B cell (primary cell): ENCODE measurements at regions of chr3 and their contacts with region 1.

Region 1: DNA sequence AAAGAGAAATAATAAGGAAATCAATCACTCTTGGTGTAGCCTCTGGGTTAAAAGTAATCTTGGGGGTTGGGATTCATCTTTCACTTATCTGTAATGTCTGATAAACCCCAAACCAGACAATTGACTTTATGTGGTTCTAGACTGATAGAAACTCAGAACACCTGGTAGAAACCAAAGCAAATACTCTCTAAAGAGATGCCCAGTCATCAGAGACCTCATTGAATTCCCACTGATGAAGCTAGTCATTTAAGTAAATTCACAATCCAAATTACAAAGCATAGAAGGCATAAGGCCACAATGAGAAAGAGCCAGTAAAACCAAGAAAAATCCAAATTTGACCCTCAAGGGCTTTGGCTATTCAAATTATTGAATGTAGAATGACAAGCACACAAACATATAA is 250.6 kb downstream of the MBNL1 start:
- DNase-seq: no peak
- ATAC-seq: no peak
- H3K4me3 ChIP-seq: no peak overlapping the region
- H3K4me3 Mint-ChIP-seq: no peak overlapping the region
- H3K27ac ChIP-seq: no peak overlapping the region
- H3K27ac Mint-ChIP-seq: peak overlapping the region; percentile 33
- H3K4me1 ChIP-seq: peaks cover 43 to 45% of the 10 kb centered on the region in 2 donors
- H3K4me1 Mint-ChIP-seq: peaks cover 62% of the 10 kb centered on the region
- H3K27me3 ChIP-seq: no peaks in the 10 kb centered on the region
- H3K27me3 Mint-ChIP-seq: no peaks in the 10 kb centered on the region
- CTCF ChIP-seq: no peak

Region 2: GRCh38 chr3:152039887-152040286 is 479.5 kb before region 1 on chr3:
- CTCF ChIA-PET with region 1: no interaction called
- POLR2A ChIA-PET with region 1: interaction called, 11 read pairs
- intact Hi-C with region 1: no loop called
- DNase-seq: no peak
- ATAC-seq: no peak
- H3K4me3 ChIP-seq: no peak overlapping the region
- H3K4me3 Mint-ChIP-seq: no peak overlapping the region
- H3K27ac ChIP-seq: no peak overlapping the region
- H3K27ac Mint-ChIP-seq: no peak overlapping the region
- H3K4me1 ChIP-seq: no peaks in the 10 kb centered on the region
- H3K4me1 Mint-ChIP-seq: peaks cover 5% of the 10 kb centered on the region
- H3K27me3 ChIP-seq: no peaks in the 10 kb centered on the region
- H3K27me3 Mint-ChIP-seq: no peaks in the 10 kb centered on the region
- CTCF ChIP-seq: no peak

Region 3: DNA sequence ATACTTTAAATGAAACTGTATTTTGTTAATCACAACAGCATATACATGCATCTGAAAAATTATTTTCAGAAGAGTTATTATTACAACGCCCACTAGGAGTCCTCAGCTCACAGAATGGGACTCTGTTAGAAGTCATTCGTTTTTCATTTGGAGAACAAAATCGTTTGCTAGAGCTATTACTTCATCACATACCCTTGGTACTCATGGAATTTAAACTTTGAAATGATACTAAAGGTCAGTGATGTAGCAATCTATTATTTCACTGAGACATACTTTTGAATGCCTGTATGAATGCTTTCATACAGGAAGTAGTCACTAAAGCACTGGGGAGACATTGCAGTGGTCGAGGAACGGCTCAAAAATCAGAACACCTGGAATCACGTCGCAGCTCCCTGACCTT is 52.6 kb before region 1 on chr3:
- CTCF ChIA-PET with region 1: interaction called, 73 read pairs
- POLR2A ChIA-PET with region 1: interaction called, 5 read pairs
- intact Hi-C with region 1: no loop called
- DNase-seq: peak; percentile 55
- ATAC-seq: peak; percentile 71
- H3K4me3 ChIP-seq: no peak overlapping the region
- H3K4me3 Mint-ChIP-seq: no peak overlapping the region
- H3K27ac ChIP-seq: peak overlapping the region in 1 of 2 donors; percentile 32
- H3K27ac Mint-ChIP-seq: peak overlapping the region; percentile 59
- H3K4me1 ChIP-seq: peaks cover 3 to 10% of the 10 kb centered on the region in 2 donors
- H3K4me1 Mint-ChIP-seq: peaks cover 20% of the 10 kb centered on the region
- H3K27me3 ChIP-seq: no peaks in the 10 kb centered on the region
- H3K27me3 Mint-ChIP-seq: no peaks in the 10 kb centered on the region
- CTCF ChIP-seq: peak; percentile 78

Region 4: DNA sequence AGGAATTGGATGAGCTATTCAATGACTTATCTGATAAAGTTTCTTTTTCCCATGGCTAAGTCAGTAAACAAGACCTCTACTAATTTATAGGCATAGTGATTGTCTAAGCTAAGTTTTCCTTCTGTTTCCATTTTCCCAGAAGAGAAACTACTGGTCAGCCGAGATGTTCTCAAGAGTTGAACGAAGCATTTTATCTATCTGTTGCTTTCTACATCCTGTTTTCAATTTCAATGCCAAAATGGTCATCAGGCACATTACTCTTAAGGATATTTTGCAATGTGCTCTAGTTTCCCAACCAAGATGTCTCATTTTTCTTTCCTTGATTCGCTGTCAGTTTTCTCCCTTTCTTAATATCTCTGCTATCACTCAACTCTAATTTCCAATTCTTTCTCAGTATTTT is 21.9 kb before region 1 on chr3:
- CTCF ChIA-PET with region 1: interaction called, 23 read pairs
- POLR2A ChIA-PET with region 1: no interaction called
- intact Hi-C with region 1: no loop called
- DNase-seq: no peak
- ATAC-seq: no peak
- H3K4me3 ChIP-seq: peak overlapping the region in 1 of 5 experiments; percentile 27
- H3K4me3 Mint-ChIP-seq: peak overlapping the region; percentile 62
- H3K27ac ChIP-seq: peak overlapping the region; percentile 45 to 74
- H3K27ac Mint-ChIP-seq: peak overlapping the region; percentile 81
- H3K4me1 ChIP-seq: peaks cover 25 to 35% of the 10 kb centered on the region in 2 donors
- H3K4me1 Mint-ChIP-seq: peaks cover 52% of the 10 kb centered on the region
- H3K27me3 ChIP-seq: no peaks in the 10 kb centered on the region
- H3K27me3 Mint-ChIP-seq: no peaks in the 10 kb centered on the region
- CTCF ChIP-seq: no peak